ENCODE measurements at regions of chr5 and their contacts with region 1.

Region 1: GRCh38 chr5:159286420-159287035 is 23.4 kb downstream of the UBLCP1 start:
- H3K4me3 Mint-ChIP-seq: no peak overlapping the region
- H3K27ac Mint-ChIP-seq: no peak overlapping the region
- H3K4me1 Mint-ChIP-seq: no peaks in the 10 kb centered on the region
- H3K27me3 Mint-ChIP-seq: no peaks in the 10 kb centered on the region

Region 2: DNA sequence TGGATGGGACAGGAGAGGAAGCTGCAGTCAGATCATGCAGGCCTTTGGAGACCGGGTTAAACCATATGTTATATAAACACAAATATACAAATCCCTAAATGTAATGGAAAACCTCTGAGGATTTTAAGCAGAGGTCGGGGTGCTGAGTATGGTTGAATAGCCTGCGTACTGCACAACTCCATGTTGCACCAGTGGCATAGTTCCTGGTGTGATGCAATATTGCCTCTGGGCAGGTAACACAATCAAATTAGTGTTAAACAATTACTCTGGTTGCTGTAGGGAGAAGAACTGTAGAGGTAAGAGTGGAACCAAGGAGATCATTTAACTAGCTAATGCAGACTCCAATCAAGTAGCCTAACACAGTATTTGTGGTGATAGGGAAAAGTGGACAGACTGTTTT is 55.9 kb before region 1 on chr5:
- intact Hi-C with region 1: no loop called
- H3K4me3 Mint-ChIP-seq: no peak overlapping the region
- H3K27ac Mint-ChIP-seq: no peak overlapping the region
- H3K4me1 Mint-ChIP-seq: no peaks in the 10 kb centered on the region
- H3K27me3 Mint-ChIP-seq: peaks cover 3% of the 10 kb centered on the region

Region 3: DNA sequence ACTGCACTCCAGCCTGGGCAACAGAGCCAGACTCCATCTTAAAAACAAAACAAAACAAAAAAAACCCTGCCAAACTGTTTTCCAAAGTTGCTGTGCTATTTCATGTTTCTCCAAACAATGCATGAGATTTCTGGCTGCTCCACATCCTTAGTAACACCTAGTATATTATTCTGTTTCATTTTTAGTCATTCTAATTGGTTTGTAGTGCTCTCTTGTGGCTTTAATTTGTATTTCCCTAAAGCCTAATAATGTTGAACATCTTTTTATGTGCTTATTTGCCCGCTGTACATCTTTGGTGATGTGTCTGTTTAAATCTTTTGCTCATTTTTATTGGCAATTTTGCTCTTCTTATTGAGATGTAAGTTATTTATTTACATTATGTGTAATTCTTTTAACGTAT is 704.0 kb after region 1 on chr5:
- intact Hi-C with region 1: loop called (anchors 10 kb)
- H3K4me3 Mint-ChIP-seq: no peak overlapping the region
- H3K27ac Mint-ChIP-seq: no peak overlapping the region
- H3K4me1 Mint-ChIP-seq: no peaks in the 10 kb centered on the region
- H3K27me3 Mint-ChIP-seq: peaks cover 38% of the 10 kb centered on the region